Ovary (tissue), 10 donors: ENCODE measurements at regions of chr17 and their contacts with region 1.

Region 1: GRCh38 chr17:59372138-59372857 is 40.8 kb downstream of the YPEL2 start:
- DNase-seq: peak in 1 of 5 donors; percentile 42
- H3K4me3 ChIP-seq: no peak overlapping the region
- H3K27ac ChIP-seq: peak overlapping the region; percentile 54 to 60
- H3K4me1 ChIP-seq: peaks cover 32% of the 10 kb centered on the region
- H3K27me3 ChIP-seq: no peaks in the 10 kb centered on the region
- CTCF ChIP-seq: no peak
- EP300 ChIP-seq: peak; percentile 45
- POLR2A ChIP-seq: no peak

Region 2: DNA sequence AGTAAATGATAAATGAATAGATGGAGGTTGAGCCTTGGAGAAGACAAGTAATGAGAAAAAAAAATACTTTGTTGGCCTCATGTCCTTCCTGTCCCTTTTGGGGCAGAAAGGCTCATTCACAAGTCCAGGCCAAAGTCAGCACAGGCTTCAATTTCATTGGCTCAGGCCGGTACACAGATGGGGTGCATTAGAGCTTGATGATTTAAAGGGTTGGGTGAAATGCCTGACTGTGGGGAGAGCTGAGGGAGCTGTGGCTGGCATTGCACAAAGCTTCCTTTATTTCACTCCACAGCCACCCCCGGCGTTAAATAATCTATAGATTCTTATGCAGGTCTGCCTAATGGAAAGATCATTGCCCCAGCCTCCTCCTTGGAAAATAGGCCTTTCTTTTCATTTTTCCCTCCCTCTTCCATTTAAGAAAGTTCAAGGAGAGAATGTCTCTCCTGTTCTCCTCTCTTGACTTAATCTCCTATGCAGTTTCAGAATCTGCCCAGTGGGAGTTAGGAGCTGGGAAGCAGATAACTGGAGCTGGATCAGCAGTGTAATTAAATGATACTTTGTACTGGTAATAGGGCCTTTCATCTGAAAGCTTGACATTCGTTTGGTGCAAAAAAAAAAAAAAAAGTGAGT is 16.5 kb before region 1 on chr17:
- intact Hi-C with region 1: no loop called
- DNase-seq: no peak
- H3K4me3 ChIP-seq: no peak overlapping the region
- H3K27ac ChIP-seq: no peak overlapping the region
- H3K4me1 ChIP-seq: peaks cover 10% of the 10 kb centered on the region
- H3K27me3 ChIP-seq: no peaks in the 10 kb centered on the region
- CTCF ChIP-seq: no peak
- EP300 ChIP-seq: no peak
- POLR2A ChIP-seq: no peak

Region 3: DNA sequence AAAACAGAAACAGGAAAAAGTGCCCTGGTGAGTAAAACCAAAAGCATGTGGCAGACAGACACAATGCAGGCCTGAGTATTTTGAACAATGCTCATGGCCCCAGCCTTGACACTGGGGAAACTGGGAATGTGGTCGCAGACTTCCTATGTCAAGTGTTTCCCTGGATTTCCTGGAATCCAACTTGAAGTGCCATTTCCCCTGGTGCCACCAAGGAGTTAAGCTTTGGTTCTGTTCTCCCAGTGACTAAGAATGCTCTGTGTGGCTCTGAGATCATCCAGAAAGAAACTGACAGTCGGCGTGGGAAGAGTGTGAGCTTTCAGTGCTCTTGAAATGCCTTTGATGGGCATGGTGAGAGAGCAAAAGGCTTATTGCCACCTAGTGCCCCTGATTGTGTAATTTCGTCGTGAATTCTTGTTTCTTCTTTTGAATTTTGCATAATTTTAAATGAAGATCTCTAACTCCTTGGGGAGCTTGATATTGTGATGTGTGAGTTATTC is 55.2 kb after region 1 on chr17:
- intact Hi-C with region 1: loop called in 1 of 4 experiments (anchors 5 kb)
- DNase-seq: no peak
- H3K4me3 ChIP-seq: no peak overlapping the region
- H3K27ac ChIP-seq: peak overlapping the region in 1 of 2 donors; percentile 67
- H3K4me1 ChIP-seq: peaks cover 13% of the 10 kb centered on the region
- H3K27me3 ChIP-seq: no peaks in the 10 kb centered on the region
- CTCF ChIP-seq: no peak
- EP300 ChIP-seq: no peak
- POLR2A ChIP-seq: no peak